Natural killer cell (primary cell): ENCODE measurements at regions of chr20 and their contacts with region 1.

Region 1: DNA sequence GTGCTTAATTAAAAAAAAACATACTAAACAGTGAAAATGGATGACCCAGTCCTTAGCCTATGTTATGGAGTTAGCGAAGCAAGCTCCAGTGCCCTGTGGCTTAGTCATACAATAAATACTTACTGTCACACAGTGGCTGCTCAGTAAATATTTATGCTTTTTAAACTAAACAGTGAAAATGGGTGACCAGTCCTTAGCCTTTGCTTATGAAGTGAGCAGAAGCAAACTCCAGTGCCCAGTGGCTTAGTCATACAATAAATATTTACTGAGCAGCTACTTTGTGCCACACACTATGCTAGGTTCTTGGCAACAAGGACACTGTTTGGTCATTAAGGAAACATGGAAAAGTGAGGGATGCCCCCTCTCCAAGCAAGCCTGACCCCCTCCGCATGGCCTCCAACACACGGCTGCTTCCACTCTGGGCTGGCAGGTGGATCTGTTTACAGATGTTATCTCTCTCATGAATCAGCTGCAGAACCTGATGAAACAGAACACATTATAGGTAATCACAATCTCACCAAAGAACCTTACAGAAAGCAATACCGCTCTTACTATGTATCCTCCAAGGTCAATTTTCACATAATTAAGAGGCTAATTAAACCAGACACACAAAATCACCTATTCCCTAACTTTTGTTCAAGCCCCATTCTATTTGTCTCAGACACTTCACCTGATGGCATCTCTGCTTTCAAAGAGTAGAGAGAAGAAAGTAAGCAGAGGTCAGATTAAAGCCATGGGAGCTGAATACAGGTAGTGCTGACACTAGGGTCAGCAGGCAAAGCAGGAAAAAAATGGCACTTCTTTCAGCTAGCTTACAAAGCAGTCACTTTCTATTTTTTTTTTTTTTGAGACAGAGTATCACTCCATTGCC is 27.3 kb downstream of the CDK5RAP1 start:
- DNase-seq: no peak
- ATAC-seq: no peak
- H3K4me3 ChIP-seq: no peak overlapping the region
- H3K4me3 Mint-ChIP-seq: no peak overlapping the region
- H3K27ac ChIP-seq: no peak overlapping the region
- H3K27ac Mint-ChIP-seq: peak overlapping the region; percentile 58 to 97
- H3K4me1 ChIP-seq: peaks cover 34% of the 10 kb centered on the region
- H3K4me1 Mint-ChIP-seq: peaks cover 29 to 33% of the 10 kb centered on the region in 2 donors
- H3K27me3 ChIP-seq: no peaks in the 10 kb centered on the region
- H3K27me3 Mint-ChIP-seq: no peaks in the 10 kb centered on the region
- CTCF ChIP-seq: no peak

Region 2: GRCh38 chr20:33401184-33401920 is 27.4 kb after region 1 on chr20 and contains the start of gene CDK5RAP1:
- intact Hi-C with region 1: loop called (anchors 1 kb)
- DNase-seq: peak; percentile 77 to 93
- ATAC-seq: peak; percentile 97 to 99 (median 99)
- H3K4me3 ChIP-seq: peak within 1 kb of the TSS; percentile 93
- H3K4me3 Mint-ChIP-seq: peak within 1 kb of the TSS; percentile 97
- H3K27ac ChIP-seq: peak within 1 kb of the TSS; percentile 61
- H3K27ac Mint-ChIP-seq: peak within 1 kb of the TSS; percentile 84 to 95
- H3K4me1 ChIP-seq: peaks cover 24% of the 10 kb centered on the region
- H3K4me1 Mint-ChIP-seq: peaks cover 35 to 49% of the 10 kb centered on the region in 2 donors
- H3K27me3 ChIP-seq: no peaks in the 10 kb centered on the region
- H3K27me3 Mint-ChIP-seq: no peaks in the 10 kb centered on the region
- CTCF ChIP-seq: no peak
- total RNA-seq, gene CDK5RAP1: 59.7 to 71.5 (median 62.6) TPM